ENCODE measurements at regions of chr1 and their contacts with region 1.

Region 1: GRCh38 chr1:112674439-112674985 is at the start of gene MOV10:
- DNase-seq: peak; percentile 67
- ATAC-seq: peak; percentile 71
- H3K4me3 ChIP-seq: peak within 1 kb of the TSS; percentile 71
- H3K27ac ChIP-seq: peak within 1 kb of the TSS; percentile 97
- H3K4me1 ChIP-seq: peaks cover 2% of the 10 kb centered on the region; the same call in 1 of the 2 replicates
- H3K27me3 ChIP-seq: no peaks in the 10 kb centered on the region
- CTCF ChIP-seq: no peak
- POLR2A ChIP-seq: peak; percentile 10; the same call in 1 of the 2 replicates
- RAD21 ChIP-seq: no peak; the same call in 1 of the 2 replicates
- total RNA-seq, gene MOV10: 33.9 and 36.7 TPM in 2 replicates

Region 2: GRCh38 chr1:112619520-112620376 is 54.8 kb before region 1 on chr1 and contains the start of gene CAPZA1:
- CTCF ChIA-PET with region 1: no interaction called
- POLR2A ChIA-PET with region 1: interaction called, 3 read pairs
- dilution Hi-C with region 1: no loop called
- in situ Hi-C with region 1: no loop called
- intact Hi-C with region 1: loop called (anchors 2 kb)
- DNase-seq: peak; percentile 90
- ATAC-seq: peak; percentile 93
- H3K4me3 ChIP-seq: peak within 1 kb of the TSS; percentile 86
- H3K27ac ChIP-seq: peak within 1 kb of the TSS; percentile 99
- H3K4me1 ChIP-seq: no peaks in the 10 kb centered on the region
- H3K27me3 ChIP-seq: no peaks in the 10 kb centered on the region
- CTCF ChIP-seq: no peak
- POLR2A ChIP-seq: peak; percentile 93
- RAD21 ChIP-seq: no peak
- total RNA-seq, gene CAPZA1: 262 and 440 TPM in 2 replicates

Region 3: GRCh38 chr1:112637254-112638116 is 37.0 kb before region 1 on chr1:
- CTCF ChIA-PET with region 1: no interaction called
- POLR2A ChIA-PET with region 1: no interaction called
- dilution Hi-C with region 1: no loop called
- in situ Hi-C with region 1: no loop called
- intact Hi-C with region 1: loop called (anchors 5 kb)
- DNase-seq: peak; percentile 37
- ATAC-seq: peak; percentile 72
- H3K4me3 ChIP-seq: no peak overlapping the region
- H3K27ac ChIP-seq: no peak overlapping the region
- H3K4me1 ChIP-seq: peaks cover 2% of the 10 kb centered on the region
- H3K27me3 ChIP-seq: no peaks in the 10 kb centered on the region
- CTCF ChIP-seq: no peak
- POLR2A ChIP-seq: no peak
- RAD21 ChIP-seq: no peak

Region 4: GRCh38 chr1:112700290-112701226 is 26.0 kb after region 1 on chr1:
- CTCF ChIA-PET with region 1: interaction called, 5 read pairs
- POLR2A ChIA-PET with region 1: interaction called, 5 read pairs
- dilution Hi-C with region 1: no loop called
- in situ Hi-C with region 1: no loop called
- intact Hi-C with region 1: loop called (anchors 2 kb)
- DNase-seq: peak; percentile 95
- ATAC-seq: peak; percentile 50
- H3K4me3 ChIP-seq: no peak overlapping the region
- H3K27ac ChIP-seq: peak overlapping the region; percentile 81
- H3K4me1 ChIP-seq: peaks cover 28% of the 10 kb centered on the region
- H3K27me3 ChIP-seq: no peaks in the 10 kb centered on the region
- CTCF ChIP-seq: no peak
- POLR2A ChIP-seq: no peak
- RAD21 ChIP-seq: no peak

Measured in IMR-90 (cell line).